ENCODE measurements at regions of chr18 and their contacts with region 1.

Region 1: GRCh38 chr18:12236934-12237832 is 17.0 kb upstream of the CIDEA start:
- DNase-seq: peak; percentile 70
- ATAC-seq: peak; percentile 92
- H3K4me3 ChIP-seq: no peak overlapping the region
- H3K4me3 Mint-ChIP-seq: no peak overlapping the region
- H3K27ac ChIP-seq: no peak overlapping the region
- H3K27ac Mint-ChIP-seq: no peak overlapping the region
- H3K4me1 ChIP-seq: peaks cover 3 to 4% of the 10 kb centered on the region in 2 donors
- H3K4me1 Mint-ChIP-seq: peaks cover 2% of the 10 kb centered on the region
- H3K27me3 ChIP-seq: peaks cover 0 to 10% (median 2%) of the 10 kb centered on the region in 4 experiments
- H3K27me3 Mint-ChIP-seq: peaks cover 28% of the 10 kb centered on the region
- CTCF ChIP-seq: peak; percentile 92

Region 2: DNA sequence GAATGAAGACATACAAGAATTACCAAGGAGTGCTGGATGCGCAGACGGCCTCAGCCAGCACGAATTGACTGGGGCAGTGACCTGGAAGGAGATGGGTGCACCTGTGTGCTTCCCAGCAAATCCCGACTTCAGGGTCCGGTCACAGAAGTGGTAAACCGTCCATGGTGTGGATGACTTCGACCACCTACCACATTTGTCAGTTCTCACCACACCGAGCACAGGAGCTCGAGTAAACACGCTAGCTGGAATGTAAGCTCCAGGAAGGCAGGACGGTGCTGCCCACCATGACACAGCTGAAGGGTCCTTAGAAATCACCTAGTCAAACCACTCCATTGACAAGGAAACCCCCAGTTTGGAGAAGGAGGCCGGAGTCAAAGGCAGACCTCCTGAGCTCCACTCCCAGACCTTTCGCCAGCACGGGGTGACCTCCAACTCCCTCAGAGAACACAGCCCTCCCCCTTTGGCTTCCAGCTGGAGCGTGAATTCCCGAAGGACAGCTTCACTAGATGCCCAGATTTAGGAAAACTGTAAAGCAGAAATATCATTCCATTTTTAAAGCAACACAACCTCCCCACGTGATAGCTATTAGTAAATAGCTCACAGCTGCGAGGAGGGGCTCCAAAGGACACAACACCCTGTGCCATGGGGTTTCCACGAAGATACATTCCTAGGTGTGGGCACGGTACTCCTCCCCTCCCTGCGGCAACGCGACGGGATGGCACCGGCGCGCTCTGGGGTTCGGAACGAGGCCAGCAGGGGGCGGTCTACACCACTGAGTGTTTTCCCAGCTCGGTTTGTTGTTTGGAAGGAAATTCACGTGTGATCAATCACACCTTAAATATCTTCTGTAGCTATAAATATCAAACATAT is 582.2 kb before region 1 on chr18:
- CTCF ChIA-PET with region 1: interaction called, 17 read pairs
- POLR2A ChIA-PET with region 1: no interaction called
- intact Hi-C with region 1: loop called (anchors 2 kb)
- DNase-seq: peak; percentile 44
- ATAC-seq: no peak
- H3K4me3 ChIP-seq: no peak overlapping the region
- H3K4me3 Mint-ChIP-seq: no peak overlapping the region
- H3K27ac ChIP-seq: no peak overlapping the region
- H3K27ac Mint-ChIP-seq: no peak overlapping the region
- H3K4me1 ChIP-seq: peaks cover 0 to 3% of the 10 kb centered on the region in 2 donors
- H3K4me1 Mint-ChIP-seq: peaks cover 4% of the 10 kb centered on the region
- H3K27me3 ChIP-seq: peaks cover 0 to 16% (median 2%) of the 10 kb centered on the region in 4 experiments
- H3K27me3 Mint-ChIP-seq: peaks cover 52% of the 10 kb centered on the region
- CTCF ChIP-seq: peak; percentile 62

Region 3: DNA sequence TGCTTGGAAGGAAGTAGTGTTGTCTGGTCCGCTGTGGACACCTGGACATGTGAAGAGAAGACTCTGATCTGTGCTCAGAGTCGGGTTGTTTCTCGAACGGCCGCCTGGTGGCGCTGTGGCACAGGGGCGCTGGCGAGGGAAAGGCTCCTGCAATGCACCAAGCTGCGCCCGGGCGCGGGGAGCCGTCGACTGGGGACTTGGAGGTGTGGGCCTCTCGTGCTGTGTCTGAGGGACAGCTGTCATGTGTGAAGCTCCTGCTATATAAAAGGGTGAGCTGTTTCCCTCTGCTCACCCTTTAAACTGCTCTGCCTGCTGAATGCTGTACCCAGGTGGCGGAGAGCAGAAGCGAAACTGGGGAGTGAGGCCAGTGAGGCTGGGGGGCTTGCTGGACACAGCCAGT is 504.2 kb before region 1 on chr18:
- CTCF ChIA-PET with region 1: interaction called, 12 read pairs
- POLR2A ChIA-PET with region 1: no interaction called
- intact Hi-C with region 1: no loop called
- DNase-seq: peak; percentile 73
- ATAC-seq: peak; percentile 68
- H3K4me3 ChIP-seq: no peak overlapping the region
- H3K4me3 Mint-ChIP-seq: peak overlapping the region; percentile 26
- H3K27ac ChIP-seq: no peak overlapping the region
- H3K27ac Mint-ChIP-seq: no peak overlapping the region
- H3K4me1 ChIP-seq: peaks cover 0 to 4% of the 10 kb centered on the region in 2 donors
- H3K4me1 Mint-ChIP-seq: peaks cover 3% of the 10 kb centered on the region
- H3K27me3 ChIP-seq: peaks cover 0 to 10% (median 2%) of the 10 kb centered on the region in 4 experiments
- H3K27me3 Mint-ChIP-seq: peaks cover 46% of the 10 kb centered on the region
- CTCF ChIP-seq: peak; percentile 92

Region 4: GRCh38 chr18:12106471-12106870 is 130.7 kb before region 1 on chr18:
- CTCF ChIA-PET with region 1: no interaction called
- POLR2A ChIA-PET with region 1: no interaction called
- intact Hi-C with region 1: no loop called
- DNase-seq: no peak
- ATAC-seq: no peak
- H3K4me3 ChIP-seq: no peak overlapping the region
- H3K4me3 Mint-ChIP-seq: no peak overlapping the region
- H3K27ac ChIP-seq: no peak overlapping the region
- H3K27ac Mint-ChIP-seq: no peak overlapping the region
- H3K4me1 ChIP-seq: no peaks in the 10 kb centered on the region
- H3K4me1 Mint-ChIP-seq: no peaks in the 10 kb centered on the region
- H3K27me3 ChIP-seq: peaks cover 0 to 10% (median 3%) of the 10 kb centered on the region in 4 experiments
- H3K27me3 Mint-ChIP-seq: peaks cover 23% of the 10 kb centered on the region
- CTCF ChIP-seq: no peak

Measured in B cell (primary cell).